CD8-positive, alpha-beta memory T cell (primary cell): ENCODE measurements at regions of chr18 and their contacts with region 1.

Region 1: DNA sequence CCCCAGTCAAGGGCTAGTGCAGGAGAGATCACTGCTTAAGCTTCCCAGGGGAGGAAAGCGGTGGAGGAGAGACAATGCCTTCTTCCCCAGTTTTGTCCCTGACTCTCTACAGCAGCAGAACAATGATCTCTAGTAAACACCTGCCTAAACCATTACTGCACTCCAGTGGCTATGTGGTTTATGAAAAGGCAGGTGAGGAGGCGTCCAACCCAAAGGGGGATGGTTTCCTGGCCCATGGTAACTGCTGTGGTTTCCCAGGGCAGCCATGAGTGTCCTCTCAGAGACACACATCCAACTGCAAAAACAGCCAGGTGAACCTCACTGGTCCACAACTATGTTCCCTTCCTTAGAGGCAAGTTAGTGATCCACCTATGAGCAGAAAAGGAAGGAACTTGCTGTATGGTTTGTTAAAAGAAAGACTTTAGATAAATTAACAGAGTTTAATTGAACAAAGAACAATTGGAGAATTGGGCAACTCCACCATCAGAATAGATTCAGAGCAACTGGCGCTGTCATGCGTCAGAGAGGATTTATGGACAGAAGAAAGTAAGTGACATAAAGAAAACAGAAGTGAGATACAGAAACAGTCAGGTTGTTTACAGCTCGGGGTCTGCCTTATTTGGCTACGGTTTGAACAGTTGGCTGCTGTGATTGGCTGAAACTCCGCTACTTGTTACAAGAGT is 4.8 kb upstream of the TTC39C start:
- DNase-seq: peak in 2 of 5 donors; percentile 36 to 52
- H3K4me3 ChIP-seq: peak overlapping the region; percentile 9
- H3K4me3 Mint-ChIP-seq: peak overlapping the region; percentile 45 to 84 (median 70)
- H3K27ac ChIP-seq: no peak overlapping the region
- H3K27ac Mint-ChIP-seq: peak overlapping the region; percentile 82 to 98 (median 96)
- H3K4me1 ChIP-seq: peaks cover 79% of the 10 kb centered on the region
- H3K4me1 Mint-ChIP-seq: peaks cover 70 to 76% (median 76%) of the 10 kb centered on the region in 3 donors
- H3K27me3 ChIP-seq: no peaks in the 10 kb centered on the region
- H3K27me3 Mint-ChIP-seq: peaks cover 0 to 4% of the 10 kb centered on the region in 2 donors

Region 2: DNA sequence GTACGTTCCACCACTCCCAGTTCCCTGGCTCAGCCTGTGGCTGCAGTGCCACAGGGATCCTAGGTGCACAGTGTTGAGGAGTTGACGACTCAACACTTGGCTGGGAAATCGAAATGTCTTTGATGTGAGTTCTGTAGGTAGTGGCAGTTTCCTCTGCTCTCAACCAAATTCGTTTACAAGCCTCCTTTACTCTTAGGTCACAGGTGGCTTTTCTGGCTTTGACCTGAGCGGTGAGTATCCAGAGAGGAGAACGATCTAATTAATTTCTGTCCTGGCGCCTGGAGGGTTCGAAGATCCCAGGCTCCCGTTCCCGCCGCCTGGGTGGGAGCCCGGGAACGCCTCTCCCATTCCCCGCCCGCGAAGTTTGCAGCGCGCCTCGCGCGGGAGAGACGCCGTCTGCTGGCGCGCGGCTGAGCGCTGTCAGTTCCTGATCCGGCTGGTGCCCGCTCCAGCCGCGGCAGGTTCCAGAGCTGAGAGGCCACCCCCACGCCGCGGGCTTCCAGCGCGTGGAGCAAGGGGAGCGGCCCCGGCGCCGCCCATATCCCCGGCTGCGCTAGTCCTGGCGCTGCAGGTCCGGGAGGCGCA is 320.7 kb before region 1 on chr18 and contains the start of gene LAMA3:
- CTCF ChIA-PET with region 1: no interaction called
- POLR2A ChIA-PET with region 1: interaction called, 10 read pairs
- DNase-seq: peak in 3 of 5 donors; percentile 3 to 22 (median 13)
- H3K4me3 ChIP-seq: peak within 1 kb of the TSS; percentile 19
- H3K4me3 Mint-ChIP-seq: peak within 1 kb of the TSS; percentile 46 to 87 (median 67)
- H3K27ac ChIP-seq: no peak within 1 kb of the TSS
- H3K27ac Mint-ChIP-seq: peak within 1 kb of the TSS in 1 of 8 donors; percentile 39
- H3K4me1 ChIP-seq: peaks cover 6% of the 10 kb centered on the region
- H3K4me1 Mint-ChIP-seq: peaks cover 7 to 13% (median 10%) of the 10 kb centered on the region in 3 donors
- H3K27me3 ChIP-seq: peaks cover 22% of the 10 kb centered on the region
- H3K27me3 Mint-ChIP-seq: peaks cover 29 to 57% of the 10 kb centered on the region in 2 donors
- total RNA-seq, gene LAMA3: not detected